Mammary epithelial cell (primary cell): ENCODE measurements at regions of chr6 and their contacts with region 1.

Region 1: DNA sequence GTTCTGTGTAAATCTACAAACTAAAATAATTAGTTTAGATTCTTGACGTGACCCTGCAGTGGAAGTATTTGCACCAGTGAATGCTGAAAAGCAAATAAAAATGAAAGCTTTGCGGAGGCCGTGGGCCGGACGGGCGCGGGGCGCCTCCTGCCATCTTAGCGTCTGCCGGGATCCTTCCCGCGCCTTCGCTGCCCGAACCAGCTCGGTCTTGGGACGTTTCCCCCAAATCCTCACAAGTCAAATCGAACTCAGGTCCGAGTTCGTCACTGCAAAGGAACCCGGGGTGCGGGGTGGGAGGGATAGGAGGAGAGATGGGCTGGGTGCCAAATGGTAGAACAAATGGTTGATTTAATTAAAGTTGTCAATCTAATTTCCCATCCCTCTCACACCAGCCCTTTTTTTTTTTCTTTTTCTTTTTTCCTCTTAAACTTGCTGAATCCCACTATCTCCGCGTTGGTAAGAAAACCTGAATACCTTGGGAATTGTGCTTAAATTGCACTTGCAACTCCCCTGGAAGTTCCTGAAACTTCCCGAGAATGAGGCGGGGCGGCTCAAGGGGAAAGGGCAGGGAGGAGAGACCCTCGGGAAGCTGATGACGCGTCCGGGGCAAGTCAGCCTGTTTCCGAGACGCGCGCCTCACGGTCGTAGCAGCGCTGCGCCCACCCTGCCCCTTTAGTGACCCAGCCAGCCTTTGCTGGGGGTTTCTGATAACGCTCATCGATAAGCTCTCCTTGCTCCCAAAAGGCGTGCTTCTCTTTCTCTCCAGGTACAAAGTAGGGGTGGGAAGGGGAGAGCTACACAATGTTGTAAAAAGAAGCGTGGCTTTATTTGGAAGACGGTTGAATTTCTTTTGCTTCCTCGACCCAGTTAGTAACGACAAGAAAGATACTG is 1.8 kb downstream of the GJA1 start:
- DNase-seq: peak; percentile 39
- H3K4me3 ChIP-seq: peak overlapping the region; percentile 73 to 98 (median 90)
- H3K27ac ChIP-seq: peak overlapping the region; percentile 96
- H3K4me1 ChIP-seq: peaks cover 21% of the 10 kb centered on the region
- H3K27me3 ChIP-seq: no peaks in the 10 kb centered on the region
- CTCF ChIP-seq: no peak

Region 2: GRCh38 chr6:121485359-121485811 is 48.2 kb after region 1 on chr6:
- CTCF ChIA-PET with region 1: no interaction called
- dilution Hi-C with region 1: no loop called
- in situ Hi-C with region 1: no loop called
- intact Hi-C with region 1: loop called (anchors 1 kb)
- DNase-seq: peak; percentile 73
- H3K4me3 ChIP-seq: no peak overlapping the region
- H3K27ac ChIP-seq: peak overlapping the region; percentile 82
- H3K4me1 ChIP-seq: peaks cover 28% of the 10 kb centered on the region
- H3K27me3 ChIP-seq: no peaks in the 10 kb centered on the region
- CTCF ChIP-seq: no peak

Region 3: GRCh38 chr6:121549716-121550115 is 112.5 kb after region 1 on chr6:
- CTCF ChIA-PET with region 1: no interaction called
- dilution Hi-C with region 1: no loop called
- in situ Hi-C with region 1: no loop called
- intact Hi-C with region 1: loop called (anchors 5 kb)
- DNase-seq: peak; percentile 91
- H3K4me3 ChIP-seq: no peak overlapping the region
- H3K27ac ChIP-seq: peak overlapping the region; percentile 44
- H3K4me1 ChIP-seq: peaks cover 21% of the 10 kb centered on the region
- H3K27me3 ChIP-seq: no peaks in the 10 kb centered on the region
- CTCF ChIP-seq: no peak

Region 4: DNA sequence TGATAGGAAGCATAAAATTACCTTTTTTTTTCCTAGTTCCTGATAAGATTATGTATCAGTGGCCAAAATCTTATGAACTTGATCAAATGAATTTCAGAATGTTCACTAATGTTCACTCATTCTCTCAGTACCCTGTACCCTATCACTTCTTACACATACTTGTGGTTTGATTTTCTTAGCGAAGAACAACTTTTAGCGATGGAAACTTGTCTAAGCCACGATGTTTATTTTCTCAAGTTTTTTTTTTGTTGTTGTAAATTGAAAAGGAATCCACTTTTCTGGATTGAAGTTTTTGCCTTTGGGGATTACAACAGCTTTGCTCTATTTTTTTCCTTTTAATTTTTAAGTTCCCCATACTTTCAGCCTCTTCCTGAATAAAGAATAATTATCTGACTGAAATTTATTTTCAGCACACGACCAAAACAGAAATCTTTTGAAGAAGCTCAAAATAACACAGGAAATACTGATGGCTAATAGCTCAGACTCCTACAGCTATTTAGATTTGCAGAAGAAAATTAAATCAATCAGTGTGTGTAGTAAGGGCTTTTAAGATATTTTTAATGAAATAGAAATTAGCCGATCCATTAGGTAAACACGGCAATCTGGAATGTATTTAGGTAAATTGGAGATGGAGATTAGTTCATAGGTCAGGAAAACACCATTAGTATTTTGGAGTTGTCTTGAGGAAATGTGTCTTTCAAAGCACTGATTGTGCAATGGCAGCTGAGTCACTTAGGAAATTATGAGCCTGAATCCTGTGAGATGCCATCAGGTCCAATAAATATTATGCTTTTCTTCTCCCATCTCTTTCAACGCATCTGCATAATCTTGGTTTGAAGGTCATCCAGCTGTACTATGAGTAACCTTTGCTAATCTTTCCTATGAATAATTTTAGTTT is 215.8 kb after region 1 on chr6:
- CTCF ChIA-PET with region 1: no interaction called
- dilution Hi-C with region 1: no loop called
- in situ Hi-C with region 1: no loop called
- intact Hi-C with region 1: loop called (anchors 5 kb)
- DNase-seq: peak; percentile 66
- H3K4me3 ChIP-seq: no peak overlapping the region
- H3K27ac ChIP-seq: no peak overlapping the region
- H3K4me1 ChIP-seq: peaks cover 2% of the 10 kb centered on the region
- H3K27me3 ChIP-seq: no peaks in the 10 kb centered on the region
- CTCF ChIP-seq: no peak

Region 5: GRCh38 chr6:121780325-121781313 is 343.4 kb after region 1 on chr6:
- CTCF ChIA-PET with region 1: no interaction called
- dilution Hi-C with region 1: no loop called
- in situ Hi-C with region 1: no loop called
- intact Hi-C with region 1: loop called (anchors 5 kb)
- DNase-seq: peak; percentile 89
- H3K4me3 ChIP-seq: no peak overlapping the region
- H3K27ac ChIP-seq: peak overlapping the region; percentile 74
- H3K4me1 ChIP-seq: peaks cover 20% of the 10 kb centered on the region
- H3K27me3 ChIP-seq: no peaks in the 10 kb centered on the region
- CTCF ChIP-seq: no peak

Region 6: DNA sequence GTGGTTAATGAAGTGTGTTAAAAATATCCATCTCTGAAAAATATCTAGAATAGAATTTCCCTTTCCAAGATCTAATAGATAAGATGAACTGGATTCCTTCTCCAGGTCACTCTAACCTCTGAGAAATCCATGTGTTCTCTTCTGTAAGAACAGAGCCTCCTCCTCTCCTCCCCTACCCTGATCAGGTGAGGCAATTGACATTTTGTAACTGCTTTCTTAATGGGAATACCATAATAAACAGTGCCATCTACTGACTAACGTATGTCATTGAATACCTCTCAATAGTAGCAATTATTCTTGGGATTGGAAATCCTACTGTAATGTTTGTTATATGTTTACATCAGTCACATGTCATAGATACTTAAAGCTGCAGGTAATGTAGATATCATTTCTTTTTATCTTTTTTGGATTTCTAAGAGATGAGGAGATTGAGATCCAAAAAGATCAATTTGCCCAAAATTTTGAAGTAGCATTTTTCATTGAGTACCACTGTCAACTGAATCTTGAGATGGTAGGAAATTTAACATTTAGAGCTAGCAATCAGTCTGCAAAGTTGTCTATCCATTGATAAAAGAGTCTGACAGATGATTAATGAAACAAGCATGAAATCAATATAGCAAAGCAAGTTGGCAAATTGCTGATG is 596.5 kb after region 1 on chr6:
- CTCF ChIA-PET with region 1: no interaction called
- dilution Hi-C with region 1: loop called (anchors 25 kb)
- in situ Hi-C with region 1: loop called in 1 of 2 experiments (anchors 10 kb)
- intact Hi-C with region 1: loop called (anchors 1 kb)
- DNase-seq: peak; percentile 47
- H3K4me3 ChIP-seq: no peak overlapping the region
- H3K27ac ChIP-seq: no peak overlapping the region
- H3K4me1 ChIP-seq: peaks cover 9% of the 10 kb centered on the region
- H3K27me3 ChIP-seq: no peaks in the 10 kb centered on the region
- CTCF ChIP-seq: peak; percentile 44 to 65